Adrenal gland (tissue), 19 donors: ENCODE measurements at regions of chr6 and their contacts with region 1.

Region 1: DNA sequence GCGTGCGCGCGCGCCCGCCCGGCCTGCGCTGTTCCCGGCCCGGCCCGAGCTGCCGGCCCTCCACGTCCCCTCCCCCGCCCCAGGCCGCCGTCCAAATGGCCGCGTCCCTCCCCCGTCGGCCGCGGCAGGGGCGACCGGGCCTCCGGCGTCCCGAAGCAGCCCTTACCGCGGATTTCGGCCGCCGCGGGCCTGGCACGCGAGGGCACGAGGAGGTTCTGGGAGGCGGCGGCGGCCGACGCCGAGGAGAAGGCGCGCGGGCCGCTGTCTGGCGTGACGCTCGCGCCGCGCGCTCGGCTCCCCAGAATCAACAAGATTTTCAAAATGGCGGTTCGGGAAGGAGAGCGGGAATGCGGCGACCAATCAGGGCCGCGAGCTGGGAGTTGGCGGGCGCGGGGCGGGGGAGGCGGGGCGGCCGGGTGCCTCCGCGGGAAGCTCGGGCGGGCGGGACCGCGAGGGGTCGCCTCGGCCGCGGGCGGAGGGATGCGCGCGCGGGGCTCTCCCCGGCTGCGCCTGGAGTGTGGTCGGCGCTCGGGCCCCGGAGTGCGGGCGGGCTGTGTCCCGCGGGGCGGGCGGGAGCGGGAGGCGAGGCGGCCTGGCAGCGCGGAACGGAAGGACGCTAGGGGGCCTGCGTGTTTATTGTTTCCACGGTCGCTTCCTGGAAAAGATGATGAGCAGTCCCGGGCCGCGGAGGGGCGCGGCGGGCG is at the start of gene DEK:
- DNase-seq: peak; percentile 85 to 94 (median 89)
- H3K4me3 ChIP-seq: peak within 1 kb of the TSS; percentile 75 to 100 (median 90)
- H3K27ac ChIP-seq: peak within 1 kb of the TSS; percentile 93 to 100 (median 98)
- H3K4me1 ChIP-seq: peaks cover 9 to 28% of the 10 kb centered on the region in 2 donors
- H3K27me3 ChIP-seq: no peaks in the 10 kb centered on the region
- CTCF ChIP-seq: peak in 5 of 6 experiments; percentile 44 to 64 (median 51)
- POLR2A ChIP-seq: peak; percentile 52 to 62
- total RNA-seq, gene DEK: 56.7 to 103 (median 62.6) TPM

Region 2: GRCh38 chr6:18155150-18155863 is 109.1 kb before region 1 on chr6 and contains the start of gene KDM1B:
- intact Hi-C with region 1: loop called (anchors 10 kb)
- DNase-seq: peak; percentile 98 to 99 (median 99)
- H3K4me3 ChIP-seq: peak within 1 kb of the TSS; percentile 69 to 98 (median 90)
- H3K27ac ChIP-seq: peak within 1 kb of the TSS; percentile 56 to 97 (median 80)
- H3K4me1 ChIP-seq: peaks cover 10 to 26% of the 10 kb centered on the region in 2 donors
- H3K27me3 ChIP-seq: no peaks in the 10 kb centered on the region
- CTCF ChIP-seq: peak in 1 of 6 experiments; percentile 10
- POLR2A ChIP-seq: peak; percentile 73 to 80
- total RNA-seq, gene KDM1B: 15.1 to 33.0 (median 18.5) TPM